CD8-positive, alpha-beta T cell (primary cell): ENCODE measurements at regions of chr3 and their contacts with region 1.

Region 1: DNA sequence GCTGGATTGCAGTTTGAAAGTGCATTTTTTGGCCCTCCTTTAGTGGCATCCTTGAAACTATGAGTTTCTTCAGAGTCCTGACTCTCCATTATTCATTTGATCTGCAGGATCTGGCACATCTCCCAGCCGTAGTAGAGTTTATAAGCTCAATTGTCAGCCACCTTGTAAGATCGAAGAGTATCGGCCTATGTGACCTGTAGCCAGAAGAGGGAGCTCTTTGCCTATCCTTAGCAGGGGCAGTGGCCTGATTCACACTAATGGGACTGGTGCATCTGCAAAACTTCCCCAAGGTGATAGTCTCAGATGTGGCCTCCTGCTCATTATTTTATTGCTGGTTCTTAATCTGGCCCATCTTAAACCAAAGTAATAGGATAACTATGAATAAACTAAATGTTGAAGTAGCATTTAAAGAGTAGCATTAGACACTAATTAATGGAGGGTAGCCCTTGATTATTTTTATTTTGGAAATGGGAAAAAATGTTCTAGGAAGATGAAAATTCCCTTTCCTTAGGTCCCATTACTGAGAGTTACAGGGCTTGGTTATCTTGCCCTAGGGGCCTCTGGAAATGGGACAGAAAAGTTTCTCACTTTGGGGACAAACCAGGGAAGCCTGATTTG is 21.2 kb downstream of the GCSAM start:
- DNase-seq: peak; percentile 30 to 84 (median 61)
- ATAC-seq: peak; percentile 94
- H3K4me3 ChIP-seq: no peak overlapping the region
- H3K4me3 Mint-ChIP-seq: no peak overlapping the region
- H3K27ac ChIP-seq: no peak overlapping the region
- H3K27ac Mint-ChIP-seq: no peak overlapping the region
- H3K4me1 ChIP-seq: no peaks in the 10 kb centered on the region
- H3K4me1 Mint-ChIP-seq: peaks cover 7% of the 10 kb centered on the region
- H3K27me3 ChIP-seq: no peaks in the 10 kb centered on the region
- H3K27me3 Mint-ChIP-seq: no peaks in the 10 kb centered on the region
- CTCF ChIP-seq: peak; percentile 82

Region 2: DNA sequence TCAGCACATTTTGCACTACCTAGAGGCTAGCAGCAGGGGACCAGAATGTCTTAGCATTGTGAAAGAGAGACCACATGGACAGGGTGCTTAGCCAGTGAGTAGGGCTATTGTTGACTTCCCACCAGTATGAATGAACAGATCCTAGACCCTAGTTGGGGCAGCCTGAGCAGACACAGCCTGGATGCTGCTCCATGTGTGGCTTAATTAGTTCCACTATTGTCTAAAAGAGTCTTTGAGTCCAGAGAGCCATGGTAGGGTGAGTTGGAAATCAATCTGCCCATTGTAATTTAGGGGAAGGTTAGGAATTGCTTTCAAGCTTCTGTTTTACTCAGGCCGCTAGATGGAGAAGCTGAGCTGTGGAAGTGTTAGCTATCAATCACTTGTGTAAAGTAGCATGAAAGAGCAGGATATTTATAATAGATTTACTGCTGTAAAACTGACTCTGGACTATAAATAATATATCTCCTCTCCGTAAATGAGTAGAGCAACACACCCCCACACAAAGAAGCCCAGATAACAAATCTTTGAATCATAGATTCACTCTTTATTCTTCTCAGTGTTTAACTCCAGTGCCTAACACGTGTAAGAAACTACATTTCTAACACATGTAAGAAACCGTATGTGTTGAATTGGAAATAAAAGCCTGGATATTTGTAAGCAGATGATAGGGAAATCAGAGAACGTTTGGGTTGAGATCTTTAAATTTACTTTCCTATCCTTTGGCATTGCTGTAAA is 25.2 kb after region 1 on chr3:
- CTCF ChIA-PET with region 1: interaction called, 17 read pairs
- POLR2A ChIA-PET with region 1: no interaction called
- intact Hi-C with region 1: loop called in 1 of 2 experiments (anchors 1 kb)
- DNase-seq: peak in 5 of 9 experiments; percentile 35 to 69 (median 46)
- ATAC-seq: peak; percentile 21
- H3K4me3 ChIP-seq: no peak overlapping the region
- H3K4me3 Mint-ChIP-seq: no peak overlapping the region
- H3K27ac ChIP-seq: no peak overlapping the region
- H3K27ac Mint-ChIP-seq: no peak overlapping the region
- H3K4me1 ChIP-seq: peaks cover 36% of the 10 kb centered on the region
- H3K4me1 Mint-ChIP-seq: peaks cover 62% of the 10 kb centered on the region
- H3K27me3 ChIP-seq: no peaks in the 10 kb centered on the region
- H3K27me3 Mint-ChIP-seq: no peaks in the 10 kb centered on the region
- CTCF ChIP-seq: peak; percentile 55

Region 3: GRCh38 chr3:112293368-112294321 is 181.8 kb after region 1 on chr3 and contains the start of gene SLC9C1:
- CTCF ChIA-PET with region 1: interaction called, 29 read pairs
- POLR2A ChIA-PET with region 1: no interaction called
- intact Hi-C with region 1: loop called (anchors 1 to 5 kb)
- DNase-seq: peak in 5 of 9 experiments; percentile 23 to 75 (median 39)
- ATAC-seq: peak; percentile 66
- H3K4me3 ChIP-seq: peak within 1 kb of the TSS in 1 of 2 experiments; percentile 13
- H3K4me3 Mint-ChIP-seq: peak within 1 kb of the TSS; percentile 71
- H3K27ac ChIP-seq: no peak within 1 kb of the TSS
- H3K27ac Mint-ChIP-seq: no peak within 1 kb of the TSS
- H3K4me1 ChIP-seq: peaks cover 7% of the 10 kb centered on the region
- H3K4me1 Mint-ChIP-seq: peaks cover 22% of the 10 kb centered on the region
- H3K27me3 ChIP-seq: no peaks in the 10 kb centered on the region
- H3K27me3 Mint-ChIP-seq: no peaks in the 10 kb centered on the region
- CTCF ChIP-seq: peak; percentile 27
- total RNA-seq, gene SLC9C1: not detected

Region 4: DNA sequence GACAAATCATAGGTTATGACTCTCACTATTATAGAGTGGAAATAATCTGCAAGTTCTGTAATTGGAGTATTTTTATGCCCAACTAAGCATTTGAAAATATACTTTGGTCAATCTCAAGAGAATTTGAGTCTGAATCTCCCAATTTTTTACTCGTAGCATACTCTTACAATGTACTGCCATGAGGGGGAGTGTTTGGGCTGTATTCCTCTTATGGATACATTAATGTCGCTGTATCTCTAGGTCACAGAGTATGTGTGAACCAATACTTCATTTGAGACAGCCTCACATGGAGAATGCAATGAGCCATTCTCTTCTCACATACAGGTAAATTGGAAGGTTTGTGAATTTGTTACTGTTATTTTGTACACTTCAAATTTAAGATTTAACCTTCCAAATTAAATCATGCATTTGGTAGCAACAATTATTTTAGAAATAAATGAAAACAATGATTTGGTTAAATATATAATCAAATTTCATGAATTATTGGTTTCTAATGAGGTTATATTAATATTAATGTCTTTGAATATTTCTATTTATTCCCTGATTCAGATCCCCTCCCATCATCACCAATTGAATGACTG is 215.6 kb after region 1 on chr3:
- CTCF ChIA-PET with region 1: interaction called, 15 read pairs
- POLR2A ChIA-PET with region 1: no interaction called
- intact Hi-C with region 1: loop called (anchors 1 to 5 kb)
- DNase-seq: peak in 4 of 9 experiments; percentile 33 to 79 (median 56)
- ATAC-seq: peak; percentile 100
- H3K4me3 ChIP-seq: no peak overlapping the region
- H3K4me3 Mint-ChIP-seq: no peak overlapping the region
- H3K27ac ChIP-seq: no peak overlapping the region
- H3K27ac Mint-ChIP-seq: no peak overlapping the region
- H3K4me1 ChIP-seq: no peaks in the 10 kb centered on the region
- H3K4me1 Mint-ChIP-seq: peaks cover 2% of the 10 kb centered on the region
- H3K27me3 ChIP-seq: no peaks in the 10 kb centered on the region
- H3K27me3 Mint-ChIP-seq: peaks cover 2% of the 10 kb centered on the region
- CTCF ChIP-seq: peak; percentile 79

Region 5: DNA sequence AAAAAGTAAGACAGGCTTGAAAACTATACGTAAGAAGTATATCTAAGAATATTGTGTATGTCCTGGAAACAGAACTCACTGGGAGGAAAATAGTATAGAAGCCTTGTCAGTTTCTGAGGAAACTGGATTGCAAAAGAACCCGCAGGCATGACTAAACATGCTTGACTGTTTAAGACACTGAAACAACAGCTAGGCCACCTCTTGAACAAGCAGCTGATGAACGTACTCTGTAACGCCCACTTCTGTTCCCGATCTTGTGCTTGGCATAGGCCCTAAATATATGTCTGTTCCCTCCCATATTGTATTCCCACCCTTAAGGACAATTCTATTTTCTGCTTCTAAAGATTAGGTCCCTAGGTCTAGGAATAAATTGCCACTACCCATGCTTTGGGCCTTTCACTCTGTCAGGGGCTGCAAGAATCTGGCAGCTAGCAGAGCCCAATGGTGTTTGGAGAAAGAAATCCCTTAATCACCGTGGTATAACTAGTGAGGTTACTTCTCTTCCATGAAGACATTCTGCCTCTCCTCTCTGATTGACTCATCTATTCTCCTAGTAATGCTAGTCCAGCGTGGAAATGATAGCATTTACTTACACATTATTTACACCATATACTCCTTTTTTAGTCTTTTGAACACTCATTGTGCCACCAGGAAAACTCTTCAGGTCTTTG is 267.3 kb after region 1 on chr3:
- CTCF ChIA-PET with region 1: no interaction called
- POLR2A ChIA-PET with region 1: no interaction called
- intact Hi-C with region 1: no loop called
- DNase-seq: no peak
- ATAC-seq: no peak
- H3K4me3 ChIP-seq: no peak overlapping the region
- H3K4me3 Mint-ChIP-seq: no peak overlapping the region
- H3K27ac ChIP-seq: no peak overlapping the region
- H3K27ac Mint-ChIP-seq: no peak overlapping the region
- H3K4me1 ChIP-seq: no peaks in the 10 kb centered on the region
- H3K4me1 Mint-ChIP-seq: no peaks in the 10 kb centered on the region
- H3K27me3 ChIP-seq: no peaks in the 10 kb centered on the region
- H3K27me3 Mint-ChIP-seq: no peaks in the 10 kb centered on the region
- CTCF ChIP-seq: no peak

Region 6: DNA sequence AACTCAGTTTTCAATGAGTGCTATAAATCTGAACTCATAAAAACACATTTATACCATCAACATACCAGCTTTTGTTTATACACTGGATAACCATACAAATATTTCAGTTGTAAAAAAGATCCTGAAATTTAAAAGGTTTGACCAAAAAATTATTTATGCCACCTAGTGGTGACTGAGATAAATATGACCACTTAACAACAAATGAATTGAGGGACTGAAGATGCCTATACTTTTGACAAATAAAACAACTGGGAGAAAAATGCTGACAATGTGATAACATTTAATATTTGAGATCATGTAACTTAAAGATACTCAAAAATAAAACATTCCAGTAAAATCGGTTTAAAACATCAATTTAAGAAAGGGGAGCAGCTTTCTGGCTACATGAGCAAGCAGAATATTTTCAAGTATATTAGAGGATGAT is 419.5 kb after region 1 on chr3:
- CTCF ChIA-PET with region 1: interaction called, 6 read pairs
- POLR2A ChIA-PET with region 1: no interaction called
- intact Hi-C with region 1: loop called (anchors 1 to 2 kb)
- DNase-seq: peak in 2 of 9 experiments; percentile 38 to 56
- ATAC-seq: peak; percentile 20
- H3K4me3 ChIP-seq: no peak overlapping the region
- H3K4me3 Mint-ChIP-seq: no peak overlapping the region
- H3K27ac ChIP-seq: no peak overlapping the region
- H3K27ac Mint-ChIP-seq: peak overlapping the region; percentile 39
- H3K4me1 ChIP-seq: no peaks in the 10 kb centered on the region
- H3K4me1 Mint-ChIP-seq: no peaks in the 10 kb centered on the region
- H3K27me3 ChIP-seq: no peaks in the 10 kb centered on the region
- H3K27me3 Mint-ChIP-seq: no peaks in the 10 kb centered on the region
- CTCF ChIP-seq: peak; percentile 78